ENCODE measurements at regions of chr12 and their contacts with region 1.

Region 1: GRCh38 chr12:29073628-29074239 is 75.3 kb upstream of the FAR2 start:
- DNase-seq: no peak
- H3K4me3 ChIP-seq: no peak overlapping the region
- H3K27ac ChIP-seq: no peak overlapping the region
- H3K4me1 ChIP-seq: peaks cover 2 to 20% (median 15%) of the 10 kb centered on the region in 4 experiments; a peak in 4 of 7 replicates
- H3K27me3 ChIP-seq: no peaks in the 10 kb centered on the region
- CTCF ChIP-seq: peak in 2 of 3 experiments; percentile 34 to 62; a peak in 2 of 4 replicates
- EP300 ChIP-seq: no peak
- POLR2A ChIP-seq: no peak
- RAD21 ChIP-seq: peak; percentile 56 to 64; a peak in 3 of 4 replicates

Region 2: GRCh38 chr12:28800129-28800528 is 273.6 kb before region 1 on chr12:
- CTCF ChIA-PET with region 1: no interaction called
- POLR2A ChIA-PET with region 1: no interaction called
- DNase-seq: no peak
- H3K4me3 ChIP-seq: no peak overlapping the region
- H3K27ac ChIP-seq: no peak overlapping the region
- H3K4me1 ChIP-seq: no peaks in the 10 kb centered on the region
- H3K27me3 ChIP-seq: no peaks in the 10 kb centered on the region; a peak in 1 of 7 replicates
- CTCF ChIP-seq: no peak
- EP300 ChIP-seq: no peak
- POLR2A ChIP-seq: no peak
- RAD21 ChIP-seq: no peak

Region 3: DNA sequence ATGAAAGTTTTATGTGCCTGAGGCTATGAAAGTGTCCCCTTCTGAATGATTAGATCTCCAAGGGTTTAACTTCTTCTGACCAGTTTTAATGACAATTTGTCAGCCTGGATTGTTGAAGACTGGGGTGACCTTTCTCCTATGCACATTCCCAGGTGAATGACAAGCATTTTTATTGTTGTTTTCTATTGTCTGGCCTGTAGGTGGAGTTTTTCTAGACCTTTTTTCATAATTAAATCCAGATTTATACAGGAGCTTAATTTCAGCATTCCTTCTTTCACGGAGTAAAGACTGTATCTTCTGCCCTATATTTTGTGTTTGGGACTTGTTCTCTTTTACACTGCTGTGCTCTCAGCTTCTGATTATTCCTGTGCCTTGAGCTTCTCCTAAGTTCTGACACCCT is 49.6 kb before region 1 on chr12:
- CTCF ChIA-PET with region 1: interaction called, 10 read pairs
- POLR2A ChIA-PET with region 1: no interaction called
- DNase-seq: no peak
- H3K4me3 ChIP-seq: no peak overlapping the region
- H3K27ac ChIP-seq: no peak overlapping the region
- H3K4me1 ChIP-seq: no peaks in the 10 kb centered on the region; a peak in 1 of 7 replicates
- H3K27me3 ChIP-seq: no peaks in the 10 kb centered on the region
- CTCF ChIP-seq: peak in 1 of 3 experiments; percentile 23; a peak in 1 of 4 replicates
- EP300 ChIP-seq: no peak
- POLR2A ChIP-seq: no peak
- RAD21 ChIP-seq: no peak

Region 4: DNA sequence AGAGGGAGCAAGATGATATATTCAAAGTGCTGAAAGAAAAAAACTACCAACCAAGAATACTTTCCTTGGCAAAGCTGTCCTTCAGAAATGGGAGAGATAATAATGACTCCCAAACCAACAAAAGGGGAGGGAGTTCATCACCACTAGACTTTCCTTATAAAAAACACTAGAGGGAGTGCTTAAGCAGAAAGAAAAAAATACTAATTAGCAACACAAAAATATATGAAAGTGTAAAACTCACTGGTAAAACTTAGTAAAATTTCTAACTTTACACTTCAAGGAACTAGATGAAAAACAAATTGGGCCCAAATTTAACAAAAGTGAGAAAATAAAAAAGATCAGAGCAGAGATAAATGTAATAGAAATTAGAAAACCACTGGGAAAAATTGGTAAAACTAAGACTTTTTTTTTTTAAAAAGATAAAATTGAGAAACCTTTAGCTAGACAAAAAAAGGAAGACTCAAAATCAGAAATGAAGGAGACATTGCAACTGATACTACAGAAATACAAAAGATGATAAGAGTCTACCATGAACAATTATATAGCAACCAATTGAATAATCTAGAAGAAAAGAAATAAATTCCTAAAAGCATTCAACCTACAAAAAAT is 15.0 kb after region 1 on chr12:
- CTCF ChIA-PET with region 1: interaction called, 53 read pairs
- POLR2A ChIA-PET with region 1: no interaction called
- DNase-seq: no peak
- H3K4me3 ChIP-seq: no peak overlapping the region
- H3K27ac ChIP-seq: no peak overlapping the region
- H3K4me1 ChIP-seq: 0 out of 7 replicates have a peak, but pooled peaks cover 0 to 3% (median 0%) of the 10 kb centered on the region in 4 experiments
- H3K27me3 ChIP-seq: no peaks in the 10 kb centered on the region
- CTCF ChIP-seq: peak in 2 of 3 experiments; percentile 16 to 33; a peak in 2 of 4 replicates
- EP300 ChIP-seq: no peak
- POLR2A ChIP-seq: no peak
- RAD21 ChIP-seq: peak; percentile 38 to 52

Region 5: DNA sequence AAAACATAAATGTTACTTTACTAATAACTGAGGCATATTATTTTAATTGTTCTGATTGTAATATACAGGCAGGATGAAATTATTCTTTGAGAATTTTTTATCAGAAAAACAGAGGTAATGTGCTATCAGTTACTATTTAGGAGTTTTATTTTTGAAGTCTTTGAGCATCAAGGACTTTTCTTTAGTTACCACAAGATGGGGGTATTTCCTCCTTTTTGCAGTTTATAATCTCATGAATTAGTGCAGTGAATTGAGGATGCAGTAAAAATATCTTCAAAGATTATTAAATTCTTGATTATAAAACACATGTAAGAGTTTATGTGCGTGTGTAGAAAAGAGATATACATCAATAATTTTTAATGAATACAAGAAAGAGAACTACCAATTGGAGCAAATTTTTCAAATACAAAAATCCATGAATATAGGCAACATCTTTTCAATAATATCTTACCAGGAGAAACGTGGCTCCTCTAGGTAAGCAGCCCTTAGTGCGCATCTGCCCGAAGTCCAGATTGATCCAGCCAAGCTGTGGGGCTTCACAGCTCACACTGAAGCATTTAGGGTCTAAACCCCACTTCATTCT is 235.7 kb after region 1 on chr12:
- CTCF ChIA-PET with region 1: interaction called, 15 read pairs
- POLR2A ChIA-PET with region 1: no interaction called
- DNase-seq: no peak
- H3K4me3 ChIP-seq: no peak overlapping the region
- H3K27ac ChIP-seq: no peak overlapping the region
- H3K4me1 ChIP-seq: no peaks in the 10 kb centered on the region
- H3K27me3 ChIP-seq: no peaks in the 10 kb centered on the region
- CTCF ChIP-seq: peak in 1 of 3 experiments; percentile 20; a peak in 2 of 4 replicates
- EP300 ChIP-seq: no peak
- POLR2A ChIP-seq: no peak
- RAD21 ChIP-seq: peak in 1 of 2 experiments; percentile 30; a peak in 3 of 4 replicates

Region 6: DNA sequence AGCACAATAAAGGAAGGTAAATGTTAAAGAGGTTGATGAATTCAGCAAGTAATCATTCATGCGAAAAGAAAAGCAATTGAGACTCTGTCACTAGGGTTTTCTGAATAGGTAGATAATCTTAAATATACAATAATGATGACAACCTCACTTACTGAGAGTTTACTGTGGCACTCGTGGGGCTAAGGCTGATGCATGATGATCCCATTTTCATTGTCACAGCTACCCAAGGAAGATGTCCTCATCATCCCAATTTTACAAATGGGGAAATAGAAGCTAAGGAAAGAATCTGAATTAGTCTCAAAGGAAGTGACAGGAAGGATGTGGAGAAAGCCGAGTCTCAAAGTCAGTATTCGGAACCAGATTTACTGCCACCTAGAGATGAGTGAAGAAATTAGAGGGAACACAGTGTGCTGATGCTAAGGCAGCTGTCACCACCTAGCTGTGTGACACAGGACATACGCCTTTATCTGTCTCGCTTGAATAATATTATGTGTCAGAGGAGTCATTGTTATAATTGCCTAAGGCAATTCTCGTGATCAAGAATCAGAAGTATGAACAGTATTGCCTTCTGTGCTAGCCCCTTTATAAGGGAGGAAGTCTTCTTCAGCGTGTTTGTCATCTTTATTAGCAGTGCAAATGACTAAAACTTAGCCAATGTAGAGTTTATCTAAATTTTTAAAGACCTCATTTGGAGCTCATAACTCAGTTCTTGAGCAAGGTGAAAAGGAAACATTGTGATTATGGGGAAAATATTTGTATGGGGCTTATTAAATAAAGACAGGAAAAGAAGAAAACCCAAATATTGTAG is 244.0 kb after region 1 on chr12:
- CTCF ChIA-PET with region 1: interaction called, 23 read pairs
- POLR2A ChIA-PET with region 1: no interaction called
- DNase-seq: peak in 1 of 2 experiments; percentile 7
- H3K4me3 ChIP-seq: no peak overlapping the region
- H3K27ac ChIP-seq: no peak overlapping the region
- H3K4me1 ChIP-seq: 0 out of 7 replicates have a peak, but pooled peaks cover 0 to 3% (median 0%) of the 10 kb centered on the region in 4 experiments
- H3K27me3 ChIP-seq: no peaks in the 10 kb centered on the region
- CTCF ChIP-seq: peak; percentile 40 to 99 (median 98)
- EP300 ChIP-seq: no peak
- POLR2A ChIP-seq: no peak
- RAD21 ChIP-seq: peak; percentile 96 to 97

Measured in H1 (cell line).